Activated T-helper 1 cell treated with anti-CD3 and anti-CD28 coated beads, Interleukin-12 subunit alpha, Interleukin-12 subunit beta, Interleukin-2, Interleukin-4 antibody, amounts not matched to agents 30 ng/mL and 10 ng/mL and 1 ng/mL, durations not matched to agents 14 hours and 24 hours and 36 hours (primary cell): ENCODE measurements at regions of chr19 and their contacts with region 1.

Region 1: DNA sequence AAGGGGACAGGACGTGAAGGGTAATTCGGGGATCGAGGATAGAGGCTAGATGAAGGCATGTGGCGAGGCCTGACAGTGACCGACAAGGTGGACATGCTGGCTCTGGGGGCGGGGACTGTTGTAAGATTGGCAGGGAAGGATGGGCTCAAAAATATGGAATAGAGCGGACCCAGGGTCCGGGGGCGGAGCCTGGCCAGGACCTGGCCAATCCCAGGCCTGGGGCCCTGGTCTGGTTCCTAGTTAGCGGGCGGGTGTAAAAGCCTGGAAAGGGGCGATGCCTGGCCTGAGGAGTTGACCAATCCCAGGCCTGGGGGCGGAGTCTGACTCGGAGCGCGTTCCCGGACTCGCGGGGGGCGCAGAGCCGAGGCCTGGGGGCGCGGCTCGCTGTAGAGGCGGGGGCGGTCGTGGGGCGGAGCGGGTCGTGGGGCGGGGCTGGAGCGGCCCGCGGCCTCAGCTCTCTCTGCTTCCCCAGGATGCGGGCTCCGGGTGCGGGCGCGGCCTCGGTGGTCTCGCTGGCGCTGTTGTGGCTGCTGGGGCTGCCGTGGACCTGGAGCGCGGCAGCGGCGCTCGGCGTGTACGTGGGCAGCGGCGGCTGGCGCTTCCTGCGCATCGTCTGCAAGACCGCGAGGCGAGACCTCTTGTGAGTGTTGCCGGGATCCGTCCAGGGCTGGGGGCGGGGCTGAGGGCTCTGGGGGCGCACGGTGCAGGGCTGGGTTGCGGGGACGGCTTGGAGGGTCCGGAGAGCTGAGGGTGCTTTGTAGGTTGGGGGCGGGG is at the start of gene SLC27A1:
- DNase-seq: peak; percentile 81
- H3K4me3 Mint-ChIP-seq: peak within 1 kb of the TSS; percentile 89
- H3K27ac Mint-ChIP-seq: peak within 1 kb of the TSS; percentile 78
- H3K4me1 Mint-ChIP-seq: peaks cover 30% of the 10 kb centered on the region
- H3K27me3 Mint-ChIP-seq: peaks cover 28% of the 10 kb centered on the region
- total RNA-seq, gene SLC27A1: 1.7 and 2.0 TPM in 2 replicates

Region 2: GRCh38 chr19:17292286-17293097 is 177.8 kb before region 1 on chr19:
- intact Hi-C with region 1: loop called (anchors 1 kb)
- DNase-seq: peak; percentile 69
- H3K4me3 Mint-ChIP-seq: peak overlapping the region; percentile 85
- H3K27ac Mint-ChIP-seq: peak overlapping the region; percentile 87
- H3K4me1 Mint-ChIP-seq: no peaks in the 10 kb centered on the region
- H3K27me3 Mint-ChIP-seq: no peaks in the 10 kb centered on the region

Region 3: GRCh38 chr19:17346109-17346671 is 124.1 kb before region 1 on chr19:
- intact Hi-C with region 1: loop called (anchors 1 kb)
- DNase-seq: peak; percentile 71
- H3K4me3 Mint-ChIP-seq: no peak overlapping the region
- H3K27ac Mint-ChIP-seq: no peak overlapping the region
- H3K4me1 Mint-ChIP-seq: peaks cover 9% of the 10 kb centered on the region
- H3K27me3 Mint-ChIP-seq: peaks cover 9% of the 10 kb centered on the region

Region 4: DNA sequence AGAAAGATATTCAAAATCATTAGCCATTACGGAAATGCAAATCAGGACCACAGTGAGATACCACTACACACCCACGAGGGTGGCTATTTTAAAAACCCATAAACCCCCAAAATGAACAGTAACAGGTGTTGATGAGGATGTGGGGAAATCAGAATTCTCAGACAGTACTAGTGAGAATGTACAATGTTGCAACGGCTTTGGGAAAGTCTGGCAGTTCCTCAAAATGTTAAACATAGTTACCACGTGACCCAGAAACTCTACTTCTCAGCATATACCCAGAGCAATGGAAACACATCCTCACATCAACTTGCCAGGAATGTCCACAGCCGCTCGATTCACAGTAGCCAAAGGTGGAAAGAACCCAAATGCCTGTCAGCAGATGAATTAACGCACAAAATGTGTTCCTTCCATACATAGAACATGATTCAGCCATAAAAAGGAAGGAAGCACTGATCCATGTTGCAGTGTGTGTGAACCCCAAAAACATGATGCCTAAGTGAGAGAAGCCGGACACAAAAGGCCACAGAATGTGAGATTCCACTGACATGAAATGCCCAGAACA is 100.1 kb before region 1 on chr19:
- intact Hi-C with region 1: no loop called
- DNase-seq: no peak
- H3K4me3 Mint-ChIP-seq: no peak overlapping the region
- H3K27ac Mint-ChIP-seq: no peak overlapping the region
- H3K4me1 Mint-ChIP-seq: no peaks in the 10 kb centered on the region
- H3K27me3 Mint-ChIP-seq: peaks cover 3% of the 10 kb centered on the region

Region 5: GRCh38 chr19:17405250-17406038 is 64.8 kb before region 1 on chr19 and contains the start of gene BST2:
- intact Hi-C with region 1: loop called (anchors 1 kb)
- DNase-seq: peak; percentile 58
- H3K4me3 Mint-ChIP-seq: peak within 1 kb of the TSS; percentile 85
- H3K27ac Mint-ChIP-seq: peak within 1 kb of the TSS; percentile 89
- H3K4me1 Mint-ChIP-seq: peaks cover 32% of the 10 kb centered on the region
- H3K27me3 Mint-ChIP-seq: no peaks in the 10 kb centered on the region
- total RNA-seq, gene BST2: 146 and 148 TPM in 2 replicates

Region 6: GRCh38 chr19:17441241-17442021 is 28.8 kb before region 1 on chr19:
- intact Hi-C with region 1: loop called (anchors 1 kb)
- DNase-seq: no peak
- H3K4me3 Mint-ChIP-seq: no peak overlapping the region
- H3K27ac Mint-ChIP-seq: no peak overlapping the region
- H3K4me1 Mint-ChIP-seq: no peaks in the 10 kb centered on the region
- H3K27me3 Mint-ChIP-seq: peaks cover 3% of the 10 kb centered on the region

Region 7: GRCh38 chr19:17496337-17496997 is 26.2 kb after region 1 on chr19:
- intact Hi-C with region 1: loop called (anchors 1 kb)
- DNase-seq: peak; percentile 74
- H3K4me3 Mint-ChIP-seq: no peak overlapping the region
- H3K27ac Mint-ChIP-seq: no peak overlapping the region
- H3K4me1 Mint-ChIP-seq: peaks cover 13% of the 10 kb centered on the region
- H3K27me3 Mint-ChIP-seq: no peaks in the 10 kb centered on the region

Region 8: GRCh38 chr19:17539238-17540117 is 69.2 kb after region 1 on chr19:
- intact Hi-C with region 1: loop called (anchors 1 kb)
- DNase-seq: peak; percentile 93
- H3K4me3 Mint-ChIP-seq: peak overlapping the region; percentile 84
- H3K27ac Mint-ChIP-seq: peak overlapping the region; percentile 63
- H3K4me1 Mint-ChIP-seq: peaks cover 11% of the 10 kb centered on the region
- H3K27me3 Mint-ChIP-seq: peaks cover 10% of the 10 kb centered on the region